ENCODE measurements at regions of chr1 and their contacts with region 1.

Region 1: DNA sequence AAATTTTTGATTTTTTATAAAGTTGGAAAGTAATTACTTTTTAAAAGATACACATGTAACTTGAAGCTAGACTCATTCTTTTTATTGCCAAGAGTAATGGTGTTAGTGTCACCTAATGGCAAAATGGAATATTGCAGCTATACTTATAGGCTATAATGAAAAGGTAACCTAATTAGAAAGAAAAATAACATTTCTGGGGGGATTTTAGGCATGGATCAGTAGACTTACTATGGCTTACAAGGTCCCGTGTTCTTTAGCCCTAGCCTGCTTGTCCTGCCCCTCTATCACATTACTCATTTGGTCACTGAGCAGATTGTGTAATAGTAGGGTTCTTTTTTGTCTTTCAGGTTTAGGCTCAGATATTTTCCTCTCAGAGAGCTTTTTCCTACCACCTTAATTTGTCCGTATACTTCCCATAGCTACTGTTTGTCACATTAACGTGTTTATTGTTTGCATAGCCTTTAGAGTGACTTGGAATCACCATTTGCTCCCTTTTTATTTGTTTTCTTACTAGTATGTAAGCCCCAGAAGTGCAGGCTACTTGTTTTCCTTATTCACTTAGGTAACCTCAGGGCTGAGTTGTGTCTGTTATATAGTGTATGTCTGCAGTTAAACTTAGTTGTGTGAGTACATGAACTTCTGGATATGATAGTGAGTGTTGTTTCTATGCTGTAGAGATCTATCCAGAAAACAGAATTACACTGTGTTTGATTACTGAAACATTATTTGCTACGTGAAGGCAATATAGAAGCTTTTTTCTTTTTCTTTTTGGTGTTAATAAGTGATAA is 58.7 kb downstream of the RABGAP1L start:
- DNase-seq: no peak
- H3K4me3 Mint-ChIP-seq: no peak overlapping the region
- H3K27ac Mint-ChIP-seq: no peak overlapping the region
- H3K4me1 Mint-ChIP-seq: no peaks in the 10 kb centered on the region
- H3K27me3 Mint-ChIP-seq: no peaks in the 10 kb centered on the region
- CTCF ChIP-seq: peak; percentile 57

Region 2: DNA sequence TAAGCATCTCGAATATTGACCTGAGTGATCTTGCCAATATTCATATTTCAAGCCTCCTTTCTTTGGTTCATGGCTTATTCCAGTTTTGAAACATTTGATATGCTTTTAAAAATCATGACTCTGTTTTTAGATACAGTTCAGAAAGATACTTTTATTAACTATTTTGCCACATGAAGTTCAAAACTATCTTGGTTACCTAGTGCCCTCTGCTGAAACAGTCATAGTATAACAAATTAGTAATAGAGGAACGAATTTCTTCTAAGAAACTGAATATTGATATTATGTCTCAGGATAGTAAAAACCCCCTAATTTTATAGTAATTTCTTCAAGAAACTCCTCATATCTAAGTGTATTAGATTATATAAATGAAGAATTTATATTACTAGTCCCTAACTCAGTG is 143.2 kb before region 1 on chr1:
- CTCF ChIA-PET with region 1: no interaction called
- intact Hi-C with region 1: loop called (anchors 5 kb)
- DNase-seq: no peak
- H3K4me3 Mint-ChIP-seq: no peak overlapping the region
- H3K27ac Mint-ChIP-seq: no peak overlapping the region
- H3K4me1 Mint-ChIP-seq: no peaks in the 10 kb centered on the region
- H3K27me3 Mint-ChIP-seq: no peaks in the 10 kb centered on the region
- CTCF ChIP-seq: peak; percentile 11

Region 3: DNA sequence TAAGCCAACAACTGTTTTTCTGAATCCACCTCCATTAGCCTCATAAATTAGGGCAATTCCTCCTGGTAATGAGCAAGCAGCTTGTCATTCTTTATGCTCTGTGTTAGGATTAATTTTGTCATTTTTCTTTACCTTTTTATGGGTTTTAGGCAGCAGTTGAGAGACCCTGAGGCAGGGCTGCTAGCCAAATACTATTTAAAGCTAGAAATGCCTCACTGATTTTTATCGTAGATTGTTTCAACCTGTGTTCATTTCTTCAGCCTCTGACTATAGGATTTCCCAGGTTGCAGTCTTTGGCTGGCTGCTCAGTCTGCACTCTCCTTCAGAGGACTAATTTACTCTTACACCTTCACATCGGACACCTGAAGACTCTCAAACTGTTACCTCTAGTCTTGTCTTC is 120.6 kb before region 1 on chr1:
- CTCF ChIA-PET with region 1: interaction called, 3 read pairs
- intact Hi-C with region 1: loop called (anchors 5 kb)
- DNase-seq: no peak
- H3K4me3 Mint-ChIP-seq: no peak overlapping the region
- H3K27ac Mint-ChIP-seq: no peak overlapping the region
- H3K4me1 Mint-ChIP-seq: no peaks in the 10 kb centered on the region
- H3K27me3 Mint-ChIP-seq: peaks cover 13% of the 10 kb centered on the region
- CTCF ChIP-seq: no peak

Region 4: GRCh38 chr1:174114788-174115448 is 103.1 kb before region 1 on chr1:
- CTCF ChIA-PET with region 1: no interaction called
- intact Hi-C with region 1: loop called (anchors 5 kb)
- DNase-seq: peak; percentile 56
- H3K4me3 Mint-ChIP-seq: no peak overlapping the region
- H3K27ac Mint-ChIP-seq: no peak overlapping the region
- H3K4me1 Mint-ChIP-seq: peaks cover 9% of the 10 kb centered on the region
- H3K27me3 Mint-ChIP-seq: no peaks in the 10 kb centered on the region
- CTCF ChIP-seq: peak; percentile 67

Region 5: DNA sequence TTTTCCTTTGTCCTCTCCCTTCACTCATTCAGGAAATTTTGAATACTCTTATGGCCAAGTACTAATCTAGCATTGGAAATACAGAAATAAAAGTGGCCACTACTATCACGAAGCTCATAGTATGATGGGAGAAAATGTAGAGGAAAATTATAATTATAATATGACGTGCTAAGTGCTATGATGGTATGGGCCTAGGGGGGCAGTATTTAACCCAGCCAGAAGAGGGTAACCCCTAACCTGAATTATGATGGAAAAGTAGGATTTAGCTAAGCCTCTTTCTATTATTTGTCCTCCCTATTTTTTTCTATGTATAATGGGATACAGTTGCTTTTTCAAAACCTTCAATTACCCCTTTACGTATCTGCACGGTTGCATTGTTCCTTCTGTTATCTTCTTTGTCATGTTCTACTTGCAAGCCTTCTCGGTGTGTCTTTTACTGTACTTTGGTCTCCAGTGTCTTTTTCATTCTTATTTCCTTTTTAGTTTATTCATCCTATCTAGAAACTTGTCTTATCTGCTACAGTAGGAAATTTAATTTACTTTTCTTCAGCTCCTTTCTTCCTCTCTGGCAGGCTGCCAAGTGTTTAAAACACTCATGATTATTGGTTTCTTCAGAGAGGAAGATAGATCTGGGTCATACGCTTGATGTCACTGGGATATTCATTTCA is 140.9 kb after region 1 on chr1:
- CTCF ChIA-PET with region 1: no interaction called
- intact Hi-C with region 1: no loop called
- DNase-seq: peak; percentile 48
- H3K4me3 Mint-ChIP-seq: no peak overlapping the region
- H3K27ac Mint-ChIP-seq: peak overlapping the region; percentile 16
- H3K4me1 Mint-ChIP-seq: peaks cover 14% of the 10 kb centered on the region
- H3K27me3 Mint-ChIP-seq: no peaks in the 10 kb centered on the region
- CTCF ChIP-seq: no peak

Region 6: DNA sequence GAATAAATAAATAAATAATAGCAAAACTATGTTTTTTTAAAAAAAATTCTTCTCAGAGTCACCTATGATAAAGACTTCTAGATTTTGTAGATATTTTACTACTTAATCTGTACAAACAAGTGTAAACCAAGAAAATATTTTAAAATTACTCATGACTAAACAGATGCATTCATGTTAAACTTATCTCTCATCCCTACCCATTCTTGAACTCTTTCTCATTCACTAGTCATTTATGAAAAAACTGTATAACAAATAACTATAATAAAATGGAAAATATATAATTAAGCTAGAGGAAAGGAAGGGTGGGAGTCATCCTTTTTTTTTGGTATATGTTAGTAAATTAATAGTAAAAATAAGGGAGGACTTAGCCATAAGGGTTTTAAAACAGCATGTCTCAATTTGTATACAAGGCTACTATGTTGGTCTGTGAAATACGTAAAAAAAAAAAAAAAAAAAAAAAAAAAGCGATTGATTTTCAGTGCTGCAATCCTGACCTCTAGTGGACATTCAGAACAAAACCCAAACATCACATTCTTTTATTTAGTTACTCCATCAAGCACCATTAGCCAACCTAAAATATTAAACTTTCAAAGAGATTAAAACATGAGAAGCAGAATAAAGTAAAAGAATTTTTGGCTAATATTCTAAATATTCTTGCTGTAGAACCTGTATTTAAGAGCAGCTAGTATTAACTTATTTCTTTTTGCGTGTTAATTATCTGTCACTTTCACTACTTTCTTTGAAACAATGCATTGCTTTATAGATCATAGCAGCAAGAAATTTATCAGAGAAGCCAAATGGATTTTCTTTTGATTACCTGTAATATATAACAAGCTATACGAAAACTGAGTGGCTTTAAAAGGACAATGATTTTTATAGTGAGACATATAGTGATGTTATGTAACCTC is 525.9 kb after region 1 on chr1:
- CTCF ChIA-PET with region 1: interaction called, 10 read pairs
- intact Hi-C with region 1: no loop called
- DNase-seq: no peak
- H3K4me3 Mint-ChIP-seq: no peak overlapping the region
- H3K27ac Mint-ChIP-seq: no peak overlapping the region
- H3K4me1 Mint-ChIP-seq: no peaks in the 10 kb centered on the region
- H3K27me3 Mint-ChIP-seq: no peaks in the 10 kb centered on the region
- CTCF ChIP-seq: peak; percentile 56

Measured in Calu3 (cell line).